Esophagus squamous epithelium (tissue), 5 donors: ENCODE measurements at regions of chr12 and their contacts with region 1.

Region 1: GRCh38 chr12:11039171-11039570 is 8.0 kb upstream of the TAS2R31 start:
- DNase-seq: no peak
- H3K4me3 ChIP-seq: no peak overlapping the region
- H3K27ac ChIP-seq: no peak overlapping the region
- H3K4me1 ChIP-seq: no peaks in the 10 kb centered on the region
- H3K27me3 ChIP-seq: no peaks in the 10 kb centered on the region
- CTCF ChIP-seq: no peak
- POLR2A ChIP-seq: no peak

Region 2: GRCh38 chr12:11092128-11092527 is 53.0 kb after region 1 on chr12 and contains the start of gene TAS2R43:
- intact Hi-C with region 1: loop called (anchors 5 kb)
- DNase-seq: no peak
- H3K4me3 ChIP-seq: no peak within 1 kb of the TSS
- H3K27ac ChIP-seq: no peak within 1 kb of the TSS
- H3K4me1 ChIP-seq: no peaks in the 10 kb centered on the region
- H3K27me3 ChIP-seq: no peaks in the 10 kb centered on the region
- CTCF ChIP-seq: no peak
- POLR2A ChIP-seq: no peak
- total RNA-seq, gene TAS2R43: 2.2 to 4.8 TPM in 2 of 4 donors, not detected in the others

Region 3: DNA sequence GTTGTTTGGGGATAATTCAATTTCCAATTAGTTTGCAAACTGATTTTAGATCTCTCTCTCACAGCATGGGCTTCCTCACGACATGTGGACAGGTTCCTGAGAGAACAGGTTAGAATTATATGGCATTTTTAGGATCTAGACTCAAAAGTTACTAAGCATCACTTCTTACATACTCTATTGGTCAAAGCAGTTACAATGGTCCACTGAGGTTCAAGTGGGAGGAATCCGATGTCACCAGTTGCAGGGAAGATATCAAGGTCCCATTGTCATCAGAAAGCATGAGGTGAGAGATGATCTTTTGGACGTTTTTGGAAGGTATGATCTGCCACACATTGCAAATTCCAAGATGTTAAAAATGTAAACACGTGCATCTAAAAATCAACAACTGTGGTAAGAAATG is 212.9 kb after region 1 on chr12:
- intact Hi-C with region 1: no loop called
- DNase-seq: no peak
- H3K4me3 ChIP-seq: no peak overlapping the region
- H3K27ac ChIP-seq: no peak overlapping the region
- H3K4me1 ChIP-seq: no peaks in the 10 kb centered on the region
- H3K27me3 ChIP-seq: no peaks in the 10 kb centered on the region
- CTCF ChIP-seq: no peak
- POLR2A ChIP-seq: no peak